RWPE1 (cell line): ENCODE measurements at regions of chr10 and their contacts with region 1.

Region 1: GRCh38 chr10:511101-511848 is 178.2 kb downstream of the DIP2C start:
- DNase-seq: peak; percentile 62
- H3K27ac ChIP-seq: peak overlapping the region; percentile 75
- CTCF ChIP-seq: peak; percentile 92

Region 2: DNA sequence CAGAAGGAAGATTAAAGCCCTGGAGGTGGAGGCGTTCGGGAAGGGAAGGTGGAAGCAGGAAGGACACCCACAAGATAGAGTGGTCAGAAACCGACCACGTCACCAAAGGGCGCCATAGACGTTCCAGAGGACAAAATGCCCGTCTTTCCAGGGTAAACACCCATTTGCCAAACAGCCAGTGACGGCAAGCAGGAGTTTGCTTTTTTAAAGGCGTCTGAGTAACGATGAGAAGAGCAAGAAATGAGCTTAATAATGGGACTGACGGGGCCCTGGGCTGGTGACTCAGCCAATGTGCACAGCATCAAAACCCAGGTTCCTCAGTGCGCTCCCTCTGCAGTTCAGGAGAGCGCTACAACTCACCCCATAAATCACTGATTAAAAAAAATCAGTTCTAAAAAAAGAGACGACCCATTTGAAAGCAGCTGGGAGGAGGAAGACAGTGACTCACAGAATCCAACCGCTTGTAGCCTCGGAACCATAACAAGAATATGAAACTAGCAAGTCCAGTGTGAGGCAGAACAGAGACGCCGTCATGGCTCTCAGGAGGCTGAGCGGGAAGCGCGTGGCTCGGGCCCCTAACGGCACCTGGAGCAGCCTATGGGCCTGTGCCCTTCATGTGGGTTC is 172.3 kb after region 1 on chr10:
- CTCF ChIA-PET with region 1: no interaction called
- POLR2A ChIA-PET with region 1: no interaction called
- DNase-seq: peak; percentile 43
- H3K27ac ChIP-seq: no peak overlapping the region
- CTCF ChIP-seq: no peak

Region 3: DNA sequence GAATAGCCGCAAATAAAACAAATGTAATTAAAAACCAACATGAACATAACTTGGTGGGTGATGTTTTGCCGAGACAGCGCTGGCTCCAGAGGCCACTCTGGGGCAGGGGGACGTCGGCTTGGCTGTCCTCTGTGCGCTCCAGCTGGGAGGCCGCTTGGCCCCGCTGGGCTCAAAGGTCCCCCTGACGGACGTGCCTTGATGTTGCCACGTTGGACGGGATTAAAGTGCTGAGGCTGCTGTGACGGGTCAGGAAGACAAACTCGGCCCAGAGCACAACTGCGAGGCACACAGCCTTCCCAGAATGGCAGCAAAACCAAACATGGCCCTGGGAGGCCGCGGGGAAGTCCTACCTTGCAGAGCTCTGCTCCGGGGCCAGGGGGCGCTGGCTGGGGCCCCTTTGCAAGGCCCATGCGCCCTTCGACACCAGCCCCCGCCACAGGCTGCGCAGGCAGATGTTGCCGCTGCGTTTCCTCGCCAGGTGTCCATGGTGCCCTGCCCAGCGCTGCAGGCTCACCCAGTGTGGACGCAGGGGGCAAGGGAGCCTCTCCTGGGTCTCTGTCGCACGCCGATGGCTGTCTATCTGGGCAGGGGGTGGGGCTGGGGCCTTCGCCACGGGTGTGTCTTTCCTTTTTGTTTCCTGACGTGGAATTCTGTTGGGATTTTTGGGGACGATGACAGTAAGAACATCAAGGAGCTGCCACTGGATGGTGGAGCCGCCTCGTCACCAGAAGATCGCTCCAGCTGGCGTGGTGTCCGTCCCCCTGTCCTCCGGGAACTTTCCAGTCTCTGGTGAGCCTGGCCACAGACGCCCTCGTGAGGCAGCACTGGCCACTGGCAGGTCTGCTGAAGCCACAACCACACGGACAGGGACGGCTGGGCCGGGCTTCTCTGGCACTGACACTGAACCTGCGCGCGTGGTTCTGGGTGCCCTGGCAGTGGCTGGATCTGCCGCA is 277.8 kb after region 1 on chr10:
- CTCF ChIA-PET with region 1: interaction called, 11 read pairs
- POLR2A ChIA-PET with region 1: no interaction called
- DNase-seq: peak; percentile 75
- H3K27ac ChIP-seq: no peak overlapping the region
- CTCF ChIP-seq: peak; percentile 75